Transverse colon (tissue), 4 donors: ENCODE measurements at regions of chr10 and their contacts with region 1.

Region 1: DNA sequence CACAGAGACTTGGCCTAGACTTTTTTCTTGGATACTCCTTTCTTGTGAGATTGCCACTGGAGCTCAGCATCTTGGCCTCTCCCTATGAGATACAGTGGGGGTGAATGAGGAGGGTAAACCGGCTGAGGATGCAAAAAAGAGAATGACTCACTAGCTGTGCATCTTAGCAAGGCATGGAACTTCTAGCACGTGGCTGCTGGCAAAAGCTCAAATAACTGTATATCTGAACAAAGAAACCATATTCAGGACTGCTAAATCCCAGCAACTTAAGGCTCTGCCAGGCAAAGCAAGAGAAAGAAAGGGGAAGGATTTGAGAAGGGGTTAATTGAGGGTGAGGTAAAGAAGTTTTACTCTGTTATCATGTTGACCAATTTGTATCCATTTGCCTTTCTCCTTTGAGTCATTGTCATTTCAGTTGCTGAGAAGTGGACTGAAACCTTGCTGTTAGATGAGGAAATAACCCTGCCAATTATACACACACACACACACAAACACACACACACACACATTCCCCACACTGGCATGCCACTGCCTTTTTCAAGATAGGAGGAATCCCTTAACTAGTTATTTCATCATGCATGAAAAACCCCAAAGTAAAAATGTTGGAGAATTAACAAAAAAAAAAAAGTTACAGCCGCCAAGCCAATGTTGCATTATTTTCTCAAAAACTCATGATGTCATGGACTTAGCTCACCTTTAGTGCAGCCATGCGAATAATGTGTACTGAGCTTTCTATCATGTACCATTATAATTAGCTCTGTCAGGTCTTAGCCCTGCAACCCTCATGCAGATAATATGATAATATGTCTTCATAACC is 997.3 kb downstream of the LRMDA start:
- DNase-seq: no peak
- H3K4me3 ChIP-seq: no peak overlapping the region
- H3K27ac ChIP-seq: peak overlapping the region; percentile 40 to 83 (median 68)
- H3K4me1 ChIP-seq: peaks cover 3 to 24% (median 12%) of the 10 kb centered on the region in 4 donors
- H3K27me3 ChIP-seq: no peaks in the 10 kb centered on the region
- CTCF ChIP-seq: no peak
- EP300 ChIP-seq: no peak
- POLR2A ChIP-seq: no peak

Region 2: DNA sequence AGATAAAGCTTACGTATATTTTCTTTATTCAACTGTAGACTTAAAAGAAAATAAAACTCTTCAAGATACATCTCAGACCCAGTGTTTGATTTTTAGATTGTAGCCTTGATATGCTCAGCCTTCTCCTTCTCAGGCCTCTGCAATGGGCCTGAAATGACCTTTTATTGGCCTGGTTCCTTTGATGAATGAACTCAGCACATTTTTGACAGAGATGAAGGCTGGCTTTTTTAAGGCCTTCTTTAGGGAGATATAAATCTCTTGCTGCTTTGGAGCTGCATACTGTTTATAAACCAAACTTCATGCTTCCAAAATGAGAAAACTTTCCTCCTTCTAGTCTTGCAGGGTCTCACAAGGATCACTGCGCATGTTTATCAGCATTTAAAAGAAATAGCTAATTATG is 52.4 kb after region 1 on chr10:
- in situ Hi-C with region 1: no loop called
- intact Hi-C with region 1: loop called (anchors 2 kb)
- DNase-seq: no peak
- H3K4me3 ChIP-seq: no peak overlapping the region
- H3K27ac ChIP-seq: no peak overlapping the region
- H3K4me1 ChIP-seq: peaks cover 0 to 5% (median 0%) of the 10 kb centered on the region in 4 donors
- H3K27me3 ChIP-seq: no peaks in the 10 kb centered on the region
- CTCF ChIP-seq: no peak
- EP300 ChIP-seq: no peak
- POLR2A ChIP-seq: no peak